CD14-positive monocyte (primary cell): ENCODE measurements at regions of chr9 and their contacts with region 1.

Region 1: DNA sequence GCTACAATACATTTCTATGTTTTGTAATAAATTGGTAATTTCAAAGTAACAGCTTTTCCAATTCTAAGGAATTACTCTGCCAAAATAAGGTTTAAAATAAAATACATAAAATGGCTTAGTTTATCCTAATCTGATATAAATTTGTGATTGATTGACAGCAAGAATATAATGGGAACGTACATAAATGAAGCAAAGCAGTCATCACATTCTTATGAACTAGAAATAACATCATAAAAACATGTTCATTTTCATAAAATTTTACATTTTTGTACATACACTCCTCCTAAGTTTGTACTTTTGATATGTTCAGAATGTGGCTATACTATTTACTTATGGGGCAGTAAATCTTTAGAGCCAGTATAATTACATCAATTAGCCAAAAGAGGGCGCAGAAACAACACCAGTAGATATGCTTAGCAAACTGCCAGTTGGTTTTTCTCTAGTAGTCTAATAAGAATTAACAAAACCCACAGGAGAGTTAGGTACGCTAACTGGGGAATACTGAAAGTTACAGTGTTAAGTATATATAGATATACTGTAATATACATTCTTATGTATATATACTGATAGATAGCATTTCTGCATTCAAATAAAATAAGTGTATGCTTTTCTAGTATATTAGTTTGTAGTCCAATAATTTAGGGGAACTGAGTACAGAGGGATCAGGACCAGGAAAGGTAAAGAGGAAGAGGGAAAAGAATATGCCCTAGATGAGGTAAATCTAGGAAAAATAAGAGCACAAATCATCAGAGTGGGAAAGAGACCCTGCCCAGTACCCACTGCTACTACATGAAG is 76.8 kb downstream of the ZDHHC21 start:
- DNase-seq: peak in 1 of 3 donors; percentile 8
- H3K4me3 ChIP-seq: no peak overlapping the region
- H3K4me3 Mint-ChIP-seq: no peak overlapping the region
- H3K27ac ChIP-seq: no peak overlapping the region
- H3K27ac Mint-ChIP-seq: no peak overlapping the region
- H3K4me1 ChIP-seq: no peaks in the 10 kb centered on the region
- H3K4me1 Mint-ChIP-seq: no peaks in the 10 kb centered on the region
- H3K27me3 ChIP-seq: no peaks in the 10 kb centered on the region
- H3K27me3 Mint-ChIP-seq: no peaks in the 10 kb centered on the region
- CTCF ChIP-seq: peak; percentile 56

Region 2: DNA sequence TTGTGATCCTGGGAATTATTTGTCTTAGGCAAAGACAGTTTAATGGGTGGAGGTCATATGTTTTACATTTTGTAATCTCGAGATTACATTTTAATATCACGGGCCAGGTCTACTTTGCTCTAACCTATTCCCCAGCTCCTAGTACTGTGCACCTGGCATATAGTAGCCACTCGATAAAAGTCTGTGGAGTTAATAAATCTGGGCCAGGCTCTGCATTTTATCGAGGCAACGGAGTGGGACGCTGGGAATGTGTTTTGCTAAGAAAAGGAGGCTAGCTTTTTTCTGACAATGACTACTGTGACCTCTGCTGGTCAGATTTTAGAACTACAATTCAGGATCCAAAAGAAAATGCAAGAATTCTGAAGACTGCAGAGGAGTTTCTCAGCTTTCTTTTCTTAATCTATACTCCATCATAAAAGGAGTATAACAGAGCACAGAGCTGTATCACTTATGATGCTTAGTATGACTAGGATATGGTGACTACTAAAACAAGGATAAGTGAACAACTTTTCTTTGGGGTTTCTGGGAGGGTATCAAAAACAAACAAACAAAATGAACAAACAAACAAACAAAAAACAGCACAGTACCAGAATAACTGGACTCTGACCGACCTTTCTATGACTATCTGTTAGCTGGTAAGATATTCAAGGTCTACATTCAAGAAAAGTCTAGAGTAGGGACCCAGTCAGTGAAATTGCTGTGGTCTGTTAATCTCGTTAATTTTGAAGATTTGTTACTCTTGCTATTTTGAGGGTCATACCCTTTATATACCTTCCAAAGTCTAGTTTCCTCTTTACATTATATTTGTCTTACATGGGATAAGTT is 152.2 kb after region 1 on chr9:
- intact Hi-C with region 1: loop called in 1 of 2 experiments (anchors 5 kb)
- DNase-seq: no peak
- H3K4me3 ChIP-seq: no peak overlapping the region
- H3K4me3 Mint-ChIP-seq: no peak overlapping the region
- H3K27ac ChIP-seq: no peak overlapping the region
- H3K27ac Mint-ChIP-seq: no peak overlapping the region
- H3K4me1 ChIP-seq: no peaks in the 10 kb centered on the region
- H3K4me1 Mint-ChIP-seq: no peaks in the 10 kb centered on the region
- H3K27me3 ChIP-seq: no peaks in the 10 kb centered on the region
- H3K27me3 Mint-ChIP-seq: peaks cover 0 to 1% (median 0%) of the 10 kb centered on the region in 3 donors
- CTCF ChIP-seq: peak; percentile 79